ENCODE measurements at regions of chr20 and their contacts with region 1.

Region 1: GRCh38 chr20:58870239-58871014 is 17.9 kb downstream of the GNAS start:
- DNase-seq: peak in 1 of 2 experiments; percentile 69
- H3K4me3 ChIP-seq: no peak overlapping the region
- H3K27ac ChIP-seq: no peak overlapping the region
- H3K4me1 ChIP-seq: no peaks in the 10 kb centered on the region
- H3K27me3 ChIP-seq: no peaks in the 10 kb centered on the region
- CTCF ChIP-seq: peak; percentile 97

Region 2: DNA sequence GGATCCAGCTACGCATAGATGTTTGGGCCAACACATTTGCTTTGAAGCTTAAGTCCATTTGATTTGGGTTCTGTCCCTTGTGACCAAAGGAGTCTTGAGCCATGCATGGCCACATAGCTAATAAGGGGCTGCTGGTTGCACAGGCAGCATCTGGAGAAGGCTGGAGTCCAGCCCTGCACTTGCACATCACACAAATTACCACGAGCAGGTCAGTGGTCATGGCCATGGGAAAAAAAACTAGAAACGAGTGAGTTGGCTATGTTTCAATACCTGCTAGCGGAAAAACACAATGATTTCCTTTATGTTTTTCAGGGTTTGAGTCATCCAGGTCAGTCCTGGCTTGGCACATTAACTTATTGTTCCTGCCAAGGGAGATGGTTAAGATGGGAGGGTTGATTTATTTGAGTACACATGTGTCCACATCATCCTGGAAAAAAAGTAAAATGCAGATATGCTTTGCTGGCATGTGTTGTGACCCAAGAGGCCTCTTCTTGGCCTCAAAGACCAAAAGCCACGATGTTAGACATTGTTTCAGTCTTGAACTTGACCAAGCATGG is 224.9 kb before region 1 on chr20:
- CTCF ChIA-PET with region 1: no interaction called
- POLR2A ChIA-PET with region 1: interaction called, 10 read pairs
- intact Hi-C with region 1: no loop called
- DNase-seq: peak; percentile 38 to 91
- H3K4me3 ChIP-seq: no peak overlapping the region
- H3K27ac ChIP-seq: peak overlapping the region; percentile 43
- H3K4me1 ChIP-seq: peaks cover 26% of the 10 kb centered on the region
- H3K27me3 ChIP-seq: no peaks in the 10 kb centered on the region
- CTCF ChIP-seq: no peak

Region 3: DNA sequence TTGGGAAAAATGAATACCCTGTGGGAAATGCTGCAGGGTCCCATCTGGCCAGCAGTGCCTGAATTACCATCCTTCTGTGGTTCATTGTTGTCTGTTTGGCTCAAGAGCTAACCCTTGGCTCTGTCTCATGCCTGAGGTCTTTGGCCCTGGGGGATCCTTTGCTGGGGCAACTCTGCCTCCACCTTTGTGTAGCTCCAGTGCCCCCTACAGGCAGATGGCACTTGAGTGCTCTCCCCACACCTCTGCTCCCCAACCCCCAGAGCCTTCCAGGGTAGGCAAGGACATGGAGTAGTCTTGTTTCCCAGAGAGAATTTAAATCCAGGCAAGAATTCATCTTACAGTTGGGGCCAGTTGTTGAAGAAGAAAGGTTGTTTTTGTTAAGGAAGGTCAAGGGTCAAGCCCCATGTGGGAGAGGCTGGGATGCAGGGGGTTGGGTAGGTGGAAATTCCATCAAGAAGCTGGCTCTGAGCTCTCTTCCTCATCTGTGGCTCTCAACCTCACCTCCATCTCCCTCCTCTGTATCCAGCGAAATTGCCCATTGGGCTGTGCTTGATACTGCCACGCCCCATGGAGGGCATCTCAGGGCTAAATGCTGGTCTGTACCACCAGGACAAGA is 337.4 kb after region 1 on chr20:
- CTCF ChIA-PET with region 1: no interaction called
- POLR2A ChIA-PET with region 1: no interaction called
- intact Hi-C with region 1: loop called (anchors 5 kb)
- DNase-seq: no peak
- H3K4me3 ChIP-seq: no peak overlapping the region
- H3K27ac ChIP-seq: no peak overlapping the region
- H3K4me1 ChIP-seq: no peaks in the 10 kb centered on the region
- H3K27me3 ChIP-seq: peaks cover 98% of the 10 kb centered on the region
- CTCF ChIP-seq: peak; percentile 53

Region 4: GRCh38 chr20:59403261-59403961 is 533.0 kb after region 1 on chr20:
- CTCF ChIA-PET with region 1: no interaction called
- POLR2A ChIA-PET with region 1: no interaction called
- intact Hi-C with region 1: loop called (anchors 5 kb)
- DNase-seq: peak in 1 of 2 experiments; percentile 31
- H3K4me3 ChIP-seq: no peak overlapping the region
- H3K27ac ChIP-seq: no peak overlapping the region
- H3K4me1 ChIP-seq: no peaks in the 10 kb centered on the region
- H3K27me3 ChIP-seq: peaks cover 99% of the 10 kb centered on the region
- CTCF ChIP-seq: peak; percentile 97